ENCODE measurements at regions of chr18 and their contacts with region 1.

Region 1: GRCh38 chr18:10304853-10305252 is 149.6 kb upstream of the APCDD1 start:
- DNase-seq: peak; percentile 12 to 60
- ATAC-seq: peak; percentile 80 to 81
- H3K4me3 ChIP-seq: no peak overlapping the region
- H3K27ac ChIP-seq: no peak overlapping the region
- H3K4me1 ChIP-seq: no peaks in the 10 kb centered on the region
- H3K27me3 ChIP-seq: no peaks in the 10 kb centered on the region
- CTCF ChIP-seq: no peak
- POLR2A ChIP-seq: no peak

Region 2: GRCh38 chr18:10041180-10041579 is 263.7 kb before region 1 on chr18:
- in situ Hi-C with region 1: no loop called
- intact Hi-C with region 1: loop called (anchors 10 kb)
- DNase-seq: peak; percentile 70 to 79
- ATAC-seq: peak; percentile 88 to 92
- H3K4me3 ChIP-seq: no peak overlapping the region
- H3K27ac ChIP-seq: peak overlapping the region; percentile 53 to 73 (median 61)
- H3K4me1 ChIP-seq: no peaks in the 10 kb centered on the region
- H3K27me3 ChIP-seq: no peaks in the 10 kb centered on the region
- CTCF ChIP-seq: no peak
- POLR2A ChIP-seq: no peak

Region 3: DNA sequence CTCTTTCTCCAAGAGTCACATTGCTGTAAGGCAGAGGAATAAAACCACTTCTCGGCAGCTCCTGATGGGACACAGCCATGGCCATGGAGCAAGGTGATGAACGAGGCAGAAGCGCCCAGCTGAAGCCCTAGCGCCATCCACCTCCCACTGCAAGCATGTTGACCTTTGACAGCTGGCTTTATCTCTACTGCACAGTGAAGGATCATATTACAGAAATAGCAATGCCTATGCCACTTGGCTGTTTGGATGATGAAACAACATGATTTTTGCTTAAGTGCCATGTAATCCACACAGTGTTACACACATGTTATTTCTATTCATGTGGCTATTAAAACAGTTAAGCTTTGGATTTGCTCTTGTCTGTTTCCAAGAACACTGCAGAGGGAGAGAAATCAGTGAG is 223.4 kb before region 1 on chr18:
- in situ Hi-C with region 1: no loop called
- intact Hi-C with region 1: no loop called
- DNase-seq: no peak
- ATAC-seq: no peak
- H3K4me3 ChIP-seq: no peak overlapping the region
- H3K27ac ChIP-seq: no peak overlapping the region
- H3K4me1 ChIP-seq: peaks cover 0 to 8% of the 10 kb centered on the region in 2 donors
- H3K27me3 ChIP-seq: no peaks in the 10 kb centered on the region
- CTCF ChIP-seq: no peak
- POLR2A ChIP-seq: no peak

Region 4: GRCh38 chr18:10482985-10483949 is 178.4 kb after region 1 on chr18:
- in situ Hi-C with region 1: no loop called
- intact Hi-C with region 1: no loop called
- DNase-seq: peak in 1 of 2 donors; percentile 28
- ATAC-seq: no peak
- H3K4me3 ChIP-seq: no peak overlapping the region
- H3K27ac ChIP-seq: no peak overlapping the region
- H3K4me1 ChIP-seq: no peaks in the 10 kb centered on the region
- H3K27me3 ChIP-seq: no peaks in the 10 kb centered on the region
- CTCF ChIP-seq: no peak
- POLR2A ChIP-seq: no peak

Region 5: GRCh38 chr18:10519999-10520935 is 215.4 kb after region 1 on chr18:
- in situ Hi-C with region 1: no loop called
- intact Hi-C with region 1: loop called (anchors 10 kb)
- DNase-seq: peak; percentile 65 to 72
- ATAC-seq: peak; percentile 76 to 88
- H3K4me3 ChIP-seq: peak overlapping the region in 1 of 4 donors; percentile 23
- H3K27ac ChIP-seq: peak overlapping the region in 1 of 4 donors; percentile 2
- H3K4me1 ChIP-seq: peaks cover 3 to 26% of the 10 kb centered on the region in 2 donors
- H3K27me3 ChIP-seq: no peaks in the 10 kb centered on the region
- CTCF ChIP-seq: peak; percentile 52 to 77 (median 74)
- POLR2A ChIP-seq: no peak

Measured in gastrocnemius medialis (tissue), 4 donors.